ENCODE measurements at regions of chr18 and their contacts with region 1.

Region 1: DNA sequence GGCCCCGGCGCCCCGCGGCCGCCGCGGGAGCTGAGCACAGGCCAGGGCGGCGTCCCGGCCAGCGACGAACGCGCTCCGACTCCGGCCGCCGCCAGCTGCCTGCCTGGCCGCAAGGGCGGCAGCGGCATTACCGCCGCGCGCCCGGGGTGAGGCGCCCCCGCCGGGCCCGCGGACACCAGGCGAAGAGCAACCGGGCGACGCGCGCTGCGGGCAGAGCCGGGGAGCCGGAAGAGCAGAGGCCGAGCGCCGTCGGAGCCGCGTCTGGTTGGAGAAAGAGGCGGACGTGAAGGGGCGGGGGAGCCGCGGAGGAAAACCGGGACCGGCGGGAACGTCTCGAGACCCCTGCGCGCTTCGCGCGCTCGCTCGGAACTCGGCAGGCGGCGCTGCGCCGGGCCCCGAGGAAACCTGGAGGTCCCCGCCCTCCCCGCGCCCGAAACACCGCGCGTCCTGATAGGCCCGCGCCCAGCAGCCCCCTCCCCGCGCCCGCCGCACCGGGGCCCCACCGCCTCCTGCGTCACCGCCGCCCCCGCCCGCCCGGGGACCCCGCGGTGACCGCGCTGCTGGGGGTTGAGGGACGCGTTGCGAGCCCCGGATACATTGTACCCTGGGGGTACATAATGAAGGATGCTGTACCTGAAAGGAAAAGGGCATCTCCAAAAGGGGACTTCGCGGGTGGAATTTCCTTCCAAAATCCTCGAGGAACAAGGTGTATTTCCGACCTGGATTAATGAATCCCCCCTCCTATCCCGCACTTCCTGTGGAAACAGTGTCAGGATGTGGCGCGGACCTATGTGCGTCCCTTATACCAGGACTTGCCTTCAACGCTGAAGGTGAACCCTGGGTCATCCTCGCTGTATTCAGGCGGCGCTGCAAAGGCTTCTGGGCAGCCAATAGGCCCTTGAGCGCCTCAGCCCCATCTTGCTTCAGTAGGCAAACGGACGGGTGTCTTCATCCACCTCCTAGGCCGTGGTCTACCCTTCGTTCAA is 1.0 kb upstream of the B4GALT6 start:
- DNase-seq: peak; percentile 83 to 88 (median 83)
- ATAC-seq: peak; percentile 85
- H3K4me3 ChIP-seq: peak overlapping the region; percentile 37
- H3K4me1 ChIP-seq: peaks cover 5% of the 10 kb centered on the region
- CTCF ChIP-seq: peak; percentile 24

Region 2: GRCh38 chr18:31637445-31637844 is 47.9 kb before region 1 on chr18:
- intact Hi-C with region 1: loop called in 1 of 2 experiments (anchors 5 kb)
- DNase-seq: no peak
- ATAC-seq: no peak
- H3K4me3 ChIP-seq: no peak overlapping the region
- H3K4me1 ChIP-seq: no peaks in the 10 kb centered on the region
- CTCF ChIP-seq: no peak